ENCODE measurements at regions of chr2 and their contacts with region 1.

Region 1: GRCh38 chr2:26521054-26521912 is 43.4 kb upstream of the OTOF start:
- DNase-seq: peak; percentile 72
- ATAC-seq: peak; percentile 93
- H3K4me3 Mint-ChIP-seq: no peak overlapping the region
- H3K27ac Mint-ChIP-seq: no peak overlapping the region; the same call in 1 of the 2 replicates
- H3K4me1 Mint-ChIP-seq: no peaks in the 10 kb centered on the region
- H3K27me3 Mint-ChIP-seq: no peaks in the 10 kb centered on the region
- CTCF ChIP-seq: no peak

Region 2: DNA sequence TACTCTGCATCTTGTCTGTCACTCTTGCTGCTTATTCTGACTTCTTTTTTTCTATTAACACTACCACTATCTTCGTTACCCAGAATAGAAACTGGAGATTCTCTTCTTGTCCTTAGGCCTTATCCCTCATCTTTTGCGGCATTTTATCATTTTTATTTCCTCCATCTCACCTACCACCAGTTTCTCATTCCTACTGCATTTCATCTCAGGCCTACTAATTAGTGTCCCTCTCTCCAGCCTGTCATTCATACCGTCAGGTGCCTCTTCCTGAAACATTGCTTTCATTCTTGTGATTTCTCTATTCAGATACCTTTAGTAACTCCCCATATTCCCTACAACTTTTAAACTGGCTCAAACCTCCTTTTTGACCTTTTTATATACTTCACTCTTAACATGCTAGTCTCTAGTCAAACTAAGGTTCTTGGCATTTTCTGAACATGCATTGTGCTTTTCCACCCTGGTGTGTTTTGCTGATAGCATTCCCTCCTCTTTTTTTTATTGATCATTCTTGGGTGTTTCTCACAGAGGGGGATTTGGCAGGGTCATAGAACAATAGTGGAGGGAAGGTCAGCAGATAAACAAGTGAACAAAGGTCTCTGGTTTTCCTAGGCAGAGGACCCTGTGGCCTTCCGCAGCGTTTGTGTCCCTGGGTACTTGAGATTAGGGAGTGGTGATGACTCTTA is 151.8 kb before region 1 on chr2:
- CTCF ChIA-PET with region 1: no interaction called
- POLR2A ChIA-PET with region 1: no interaction called
- DNase-seq: no peak
- ATAC-seq: no peak
- H3K4me3 Mint-ChIP-seq: no peak overlapping the region
- H3K27ac Mint-ChIP-seq: no peak overlapping the region
- H3K4me1 Mint-ChIP-seq: no peaks in the 10 kb centered on the region
- H3K27me3 Mint-ChIP-seq: no peaks in the 10 kb centered on the region
- CTCF ChIP-seq: no peak

Region 3: DNA sequence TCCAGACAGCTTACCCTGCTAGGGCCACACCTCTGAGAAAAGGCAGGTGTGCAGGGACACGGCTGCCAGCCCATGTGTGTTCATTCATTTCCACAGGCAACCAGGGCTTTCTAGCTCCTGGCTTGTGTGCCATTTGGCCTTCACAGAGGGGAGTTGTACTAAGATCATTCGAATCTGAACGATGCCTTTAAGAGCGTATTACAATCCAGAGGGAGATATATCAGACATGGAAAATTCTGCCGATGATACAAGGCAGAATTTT is 20.8 kb after region 1 on chr2:
- CTCF ChIA-PET with region 1: interaction called, 20 read pairs
- POLR2A ChIA-PET with region 1: no interaction called
- DNase-seq: no peak
- ATAC-seq: no peak
- H3K4me3 Mint-ChIP-seq: no peak overlapping the region
- H3K27ac Mint-ChIP-seq: no peak overlapping the region
- H3K4me1 Mint-ChIP-seq: peaks cover 28% of the 10 kb centered on the region
- H3K27me3 Mint-ChIP-seq: no peaks in the 10 kb centered on the region
- CTCF ChIP-seq: no peak

Region 4: DNA sequence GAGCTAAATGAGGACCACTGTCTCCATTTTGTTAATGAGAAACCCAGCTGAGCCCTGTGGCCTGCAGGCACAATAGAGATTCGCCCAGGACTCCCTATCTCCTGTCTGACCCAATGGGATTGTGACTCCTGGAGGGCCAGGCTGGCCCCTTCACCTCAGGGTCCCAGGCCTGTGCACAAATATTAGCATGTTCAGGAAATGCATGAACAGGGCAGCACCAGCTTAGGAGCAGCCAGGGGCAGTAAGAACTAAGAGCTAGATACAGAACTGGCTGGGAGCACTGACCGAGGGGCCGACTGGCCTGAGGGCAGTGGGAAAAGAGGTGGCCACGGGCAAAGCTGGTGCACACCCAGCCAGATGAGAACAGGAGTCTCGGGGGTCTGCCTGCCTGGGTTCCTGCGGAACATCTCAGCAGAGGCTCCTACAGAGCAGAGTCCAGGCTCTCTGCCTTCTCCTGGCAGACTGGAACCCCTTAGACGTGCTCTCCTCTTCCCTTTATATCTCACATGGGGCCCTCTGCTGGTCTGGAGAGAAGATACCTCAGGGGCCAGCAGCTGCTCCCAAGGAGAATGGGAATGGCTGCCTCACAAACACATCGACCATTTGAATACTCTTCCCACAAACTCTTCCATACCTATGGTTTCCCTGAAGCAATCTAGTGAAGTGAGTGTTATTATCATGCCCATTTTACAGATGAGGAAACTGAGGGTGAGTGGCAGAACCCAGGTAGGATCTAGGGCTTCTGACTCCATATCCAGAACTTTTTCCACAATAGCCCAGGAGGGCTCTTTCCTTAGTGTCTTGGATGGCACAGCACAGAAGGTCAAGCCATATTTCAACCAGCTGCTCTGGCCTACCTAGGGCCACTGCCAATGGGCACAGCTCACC is 34.2 kb after region 1 on chr2:
- CTCF ChIA-PET with region 1: interaction called, 14 read pairs
- POLR2A ChIA-PET with region 1: no interaction called
- DNase-seq: no peak
- ATAC-seq: peak; percentile 49
- H3K4me3 Mint-ChIP-seq: no peak overlapping the region
- H3K27ac Mint-ChIP-seq: no peak overlapping the region
- H3K4me1 Mint-ChIP-seq: peaks cover 14% of the 10 kb centered on the region
- H3K27me3 Mint-ChIP-seq: peaks cover 10% of the 10 kb centered on the region
- CTCF ChIP-seq: no peak

Region 5: GRCh38 chr2:26561918-26562810 is 40.9 kb after region 1 on chr2:
- CTCF ChIA-PET with region 1: interaction called, 13 read pairs
- POLR2A ChIA-PET with region 1: no interaction called
- DNase-seq: peak; percentile 47
- ATAC-seq: peak; percentile 49
- H3K4me3 Mint-ChIP-seq: peak overlapping the region; percentile 62
- H3K27ac Mint-ChIP-seq: no peak overlapping the region
- H3K4me1 Mint-ChIP-seq: peaks cover 8% of the 10 kb centered on the region
- H3K27me3 Mint-ChIP-seq: peaks cover 43% of the 10 kb centered on the region
- CTCF ChIP-seq: no peak